GM18951 (cell line): ENCODE measurements at regions of chr7 and their contacts with region 1.

Region 1: GRCh38 chr7:106176414-106177299 is 64.5 kb upstream of the SYPL1 start:
- POLR2A ChIP-seq: no peak

Region 2: GRCh38 chr7:104497387-104497786 is 1679.3 kb before region 1 on chr7:
- in situ Hi-C with region 1: no loop called
- POLR2A ChIP-seq: no peak

Region 3: DNA sequence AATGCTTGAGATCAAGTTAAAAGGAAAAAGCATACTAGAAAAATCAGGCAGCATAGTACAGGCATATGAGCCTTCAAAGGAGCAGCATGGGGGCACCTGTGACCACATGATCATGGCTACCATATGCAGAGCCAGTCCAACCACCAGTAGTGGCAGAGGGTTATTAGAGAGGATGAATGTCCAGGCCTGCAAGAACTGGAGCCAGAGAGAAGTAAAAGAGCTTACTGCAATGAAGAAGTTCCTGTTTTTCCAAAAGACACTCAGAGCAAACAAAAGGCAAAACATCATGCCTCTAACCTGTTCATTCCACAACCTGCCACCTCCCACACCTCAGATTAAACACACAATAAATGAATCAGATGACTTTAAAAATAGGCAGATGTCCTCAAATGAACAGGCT is 207.7 kb after region 1 on chr7:
- in situ Hi-C with region 1: no loop called
- POLR2A ChIP-seq: no peak

Region 4: GRCh38 chr7:106465704-106466468 is 289.2 kb after region 1 on chr7:
- in situ Hi-C with region 1: loop called (anchors 5 kb)
- POLR2A ChIP-seq: no peak

Region 5: GRCh38 chr7:106644999-106645398 is 468.3 kb after region 1 on chr7:
- in situ Hi-C with region 1: loop called (anchors 25 kb)
- POLR2A ChIP-seq: no peak

Region 6: GRCh38 chr7:106736508-106737201 is 560.0 kb after region 1 on chr7:
- in situ Hi-C with region 1: loop called (anchors 10 kb)
- POLR2A ChIP-seq: no peak